ENCODE measurements at regions of chr2 and their contacts with region 1.

Region 1: GRCh38 chr2:10043906-10044601 is 704 bp downstream of the KLF11 start:
- DNase-seq: peak; percentile 92 to 97 (median 95)
- H3K4me3 ChIP-seq: peak overlapping the region in 1 of 2 donors; percentile 43
- H3K4me3 Mint-ChIP-seq: peak overlapping the region; percentile 69 to 86 (median 84)
- H3K27ac ChIP-seq: peak overlapping the region; percentile 66
- H3K27ac Mint-ChIP-seq: peak overlapping the region; percentile 90 to 99 (median 98)
- H3K4me1 ChIP-seq: peaks cover 21% of the 10 kb centered on the region
- H3K4me1 Mint-ChIP-seq: peaks cover 18 to 45% (median 27%) of the 10 kb centered on the region in 4 donors
- H3K27me3 ChIP-seq: no peaks in the 10 kb centered on the region
- H3K27me3 Mint-ChIP-seq: no peaks in the 10 kb centered on the region

Region 2: GRCh38 chr2:9799665-9800632 is 244.1 kb before region 1 on chr2:
- CTCF ChIA-PET with region 1: interaction called, 16 read pairs
- POLR2A ChIA-PET with region 1: interaction called, 4 read pairs
- intact Hi-C with region 1: loop called (anchors 1 kb)
- DNase-seq: peak; percentile 76 to 84 (median 79)
- H3K4me3 ChIP-seq: peak overlapping the region in 1 of 2 donors; percentile 21
- H3K4me3 Mint-ChIP-seq: peak overlapping the region; percentile 71 to 96 (median 89)
- H3K27ac ChIP-seq: peak overlapping the region; percentile 75
- H3K27ac Mint-ChIP-seq: peak overlapping the region; percentile 92 to 98 (median 93)
- H3K4me1 ChIP-seq: peaks cover 36% of the 10 kb centered on the region
- H3K4me1 Mint-ChIP-seq: peaks cover 21 to 48% (median 33%) of the 10 kb centered on the region in 4 donors
- H3K27me3 ChIP-seq: no peaks in the 10 kb centered on the region
- H3K27me3 Mint-ChIP-seq: no peaks in the 10 kb centered on the region

Region 3: GRCh38 chr2:9843229-9844035 is 200.6 kb before region 1 on chr2 and contains the start of gene TAF1B:
- CTCF ChIA-PET with region 1: interaction called, 3 read pairs
- POLR2A ChIA-PET with region 1: interaction called, 17 read pairs
- intact Hi-C with region 1: loop called (anchors 1 kb)
- DNase-seq: peak; percentile 82 to 84 (median 83)
- H3K4me3 ChIP-seq: peak within 1 kb of the TSS; percentile 85 to 92
- H3K4me3 Mint-ChIP-seq: peak within 1 kb of the TSS; percentile 91 to 97 (median 94)
- H3K27ac ChIP-seq: peak within 1 kb of the TSS; percentile 76
- H3K27ac Mint-ChIP-seq: peak within 1 kb of the TSS; percentile 82 to 97 (median 93)
- H3K4me1 ChIP-seq: peaks cover 41% of the 10 kb centered on the region
- H3K4me1 Mint-ChIP-seq: peaks cover 32 to 50% (median 40%) of the 10 kb centered on the region in 4 donors
- H3K27me3 ChIP-seq: no peaks in the 10 kb centered on the region
- H3K27me3 Mint-ChIP-seq: no peaks in the 10 kb centered on the region
- total RNA-seq, gene TAF1B: 23.5 to 23.9 TPM

Region 4: GRCh38 chr2:9984217-9984739 is 59.8 kb before region 1 on chr2:
- CTCF ChIA-PET with region 1: interaction called, 431 read pairs
- POLR2A ChIA-PET with region 1: interaction called, 72 read pairs
- intact Hi-C with region 1: loop called (anchors 1 kb)
- DNase-seq: peak in 4 of 5 donors; percentile 54 to 60 (median 59)
- H3K4me3 ChIP-seq: no peak overlapping the region
- H3K4me3 Mint-ChIP-seq: peak overlapping the region in 1 of 8 donors; percentile 1
- H3K27ac ChIP-seq: no peak overlapping the region
- H3K27ac Mint-ChIP-seq: peak overlapping the region in 1 of 7 donors; percentile 73
- H3K4me1 ChIP-seq: peaks cover 14% of the 10 kb centered on the region
- H3K4me1 Mint-ChIP-seq: peaks cover 10 to 14% (median 11%) of the 10 kb centered on the region in 4 donors
- H3K27me3 ChIP-seq: no peaks in the 10 kb centered on the region
- H3K27me3 Mint-ChIP-seq: peaks cover 0 to 2% of the 10 kb centered on the region in 2 donors

Region 5: DNA sequence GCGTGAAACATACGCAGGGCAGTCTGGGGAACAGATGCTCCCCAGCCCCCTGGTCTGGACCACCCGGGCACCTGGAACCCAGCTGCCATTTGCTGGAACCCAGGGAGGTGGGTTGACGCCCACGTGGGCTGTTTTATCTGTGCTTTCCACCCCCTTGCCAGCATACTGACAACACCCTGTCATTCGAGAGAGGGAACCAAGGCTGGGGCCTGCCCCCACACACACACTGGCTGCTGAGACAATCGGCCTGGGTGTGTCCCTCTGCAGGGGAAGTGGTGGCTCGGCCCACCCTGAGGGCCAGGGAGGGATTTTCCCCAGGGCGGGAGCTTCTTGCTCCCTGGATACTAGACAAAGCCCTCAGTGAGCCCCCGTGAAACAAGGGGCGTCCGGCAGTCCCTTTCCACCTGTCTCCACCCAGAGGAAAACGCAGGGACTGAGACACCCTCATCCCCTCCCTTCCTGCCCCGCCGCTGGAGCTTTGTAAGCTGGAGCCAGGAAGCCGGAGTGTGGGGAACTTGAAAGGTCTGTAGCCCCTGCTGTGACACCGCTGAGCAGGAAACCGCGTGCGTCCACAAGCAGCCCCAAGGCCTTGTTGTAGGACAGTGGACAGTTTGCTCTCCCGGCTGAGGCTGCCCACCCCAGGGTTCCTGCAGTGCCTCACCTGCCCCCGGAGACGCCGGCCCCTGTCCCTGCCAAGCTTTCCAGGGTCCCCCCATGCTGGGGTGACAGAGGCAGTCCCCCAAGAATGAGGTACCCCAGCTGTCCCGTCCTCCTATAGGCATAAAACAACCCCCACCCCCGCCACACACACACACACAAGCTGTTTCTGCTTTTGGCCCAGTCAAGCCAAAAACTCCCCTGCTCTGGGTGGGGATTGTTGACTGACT is 14.8 kb before region 1 on chr2:
- CTCF ChIA-PET with region 1: interaction called, 53 read pairs
- POLR2A ChIA-PET with region 1: interaction called, 30 read pairs
- intact Hi-C with region 1: loop called (anchors 1 kb)
- DNase-seq: peak; percentile 21 to 60 (median 57)
- H3K4me3 ChIP-seq: peak overlapping the region; percentile 42 to 51
- H3K4me3 Mint-ChIP-seq: peak overlapping the region; percentile 48 to 80 (median 69)
- H3K27ac ChIP-seq: peak overlapping the region; percentile 9
- H3K27ac Mint-ChIP-seq: peak overlapping the region; percentile 39 to 90 (median 73)
- H3K4me1 ChIP-seq: peaks cover 30% of the 10 kb centered on the region
- H3K4me1 Mint-ChIP-seq: peaks cover 4 to 34% (median 23%) of the 10 kb centered on the region in 4 donors
- H3K27me3 ChIP-seq: no peaks in the 10 kb centered on the region
- H3K27me3 Mint-ChIP-seq: no peaks in the 10 kb centered on the region

Region 6: GRCh38 chr2:10064932-10065772 is 21.1 kb after region 1 on chr2:
- CTCF ChIA-PET with region 1: no interaction called
- POLR2A ChIA-PET with region 1: no interaction called
- intact Hi-C with region 1: no loop called
- DNase-seq: no peak
- H3K4me3 ChIP-seq: no peak overlapping the region
- H3K4me3 Mint-ChIP-seq: no peak overlapping the region
- H3K27ac ChIP-seq: no peak overlapping the region
- H3K27ac Mint-ChIP-seq: no peak overlapping the region
- H3K4me1 ChIP-seq: no peaks in the 10 kb centered on the region
- H3K4me1 Mint-ChIP-seq: peaks cover 0 to 11% (median under 1%) of the 10 kb centered on the region in 4 donors
- H3K27me3 ChIP-seq: no peaks in the 10 kb centered on the region
- H3K27me3 Mint-ChIP-seq: no peaks in the 10 kb centered on the region

Region 7: DNA sequence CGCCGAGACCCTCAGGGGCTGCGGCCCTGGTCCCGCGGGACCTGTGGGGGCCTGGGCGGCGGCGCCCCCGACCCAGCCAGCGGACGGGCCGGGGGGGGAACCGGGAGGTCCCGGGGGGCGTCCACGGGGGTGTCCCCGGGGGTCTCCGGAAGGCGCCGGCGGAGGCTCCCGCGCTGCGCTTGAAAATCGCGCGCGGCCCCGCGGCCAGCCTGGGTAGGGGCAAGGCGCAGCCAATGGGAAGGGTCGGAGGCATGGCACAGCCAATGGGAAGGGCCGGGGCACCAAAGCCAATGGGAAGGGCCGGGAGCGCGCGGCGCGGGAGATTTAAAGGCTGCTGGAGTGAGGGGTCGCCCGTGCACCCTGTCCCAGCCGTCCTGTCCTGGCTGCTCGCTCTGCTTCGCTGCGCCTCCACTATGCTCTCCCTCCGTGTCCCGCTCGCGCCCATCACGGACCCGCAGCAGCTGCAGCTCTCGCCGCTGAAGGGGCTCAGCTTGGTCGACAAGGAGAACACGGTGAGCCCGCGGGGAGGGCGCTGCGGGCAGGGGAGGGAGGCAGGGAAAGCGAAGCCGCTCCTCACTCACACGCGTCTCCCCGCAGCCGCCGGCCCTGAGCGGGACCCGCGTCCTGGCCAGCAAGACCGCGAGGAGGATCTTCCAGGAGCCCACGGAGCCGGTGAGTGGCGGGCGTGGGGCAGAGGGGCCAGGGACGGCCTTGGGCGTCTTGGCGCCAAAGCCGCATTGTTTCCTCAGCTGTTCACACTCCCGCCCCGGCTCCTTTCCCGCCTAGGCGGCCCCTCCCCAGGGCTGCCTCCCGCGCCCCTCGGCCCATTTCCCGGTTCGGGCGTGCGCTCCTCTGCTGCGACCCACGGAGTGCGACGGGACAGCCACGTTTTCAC is 78.6 kb after region 1 on chr2 and contains the start of gene RRM2:
- CTCF ChIA-PET with region 1: interaction called, 3 read pairs
- POLR2A ChIA-PET with region 1: no interaction called
- intact Hi-C with region 1: loop called (anchors 1 kb)
- DNase-seq: peak; percentile 81 to 87 (median 85)
- H3K4me3 ChIP-seq: peak within 1 kb of the TSS; percentile 32 to 50
- H3K4me3 Mint-ChIP-seq: peak within 1 kb of the TSS; percentile 89 to 99 (median 98)
- H3K27ac ChIP-seq: no peak within 1 kb of the TSS
- H3K27ac Mint-ChIP-seq: peak within 1 kb of the TSS; percentile 51 to 91 (median 58)
- H3K4me1 ChIP-seq: peaks cover 52% of the 10 kb centered on the region
- H3K4me1 Mint-ChIP-seq: peaks cover 32 to 56% (median 42%) of the 10 kb centered on the region in 4 donors
- H3K27me3 ChIP-seq: peaks cover 5% of the 10 kb centered on the region
- H3K27me3 Mint-ChIP-seq: peaks cover 5 to 12% of the 10 kb centered on the region in 2 donors
- total RNA-seq, gene RRM2: 0.42 TPM in 1 of 2 experiments, not detected in the other